Ovary (tissue), 10 donors: ENCODE measurements at regions of chr16 and their contacts with region 1.

Region 1: DNA sequence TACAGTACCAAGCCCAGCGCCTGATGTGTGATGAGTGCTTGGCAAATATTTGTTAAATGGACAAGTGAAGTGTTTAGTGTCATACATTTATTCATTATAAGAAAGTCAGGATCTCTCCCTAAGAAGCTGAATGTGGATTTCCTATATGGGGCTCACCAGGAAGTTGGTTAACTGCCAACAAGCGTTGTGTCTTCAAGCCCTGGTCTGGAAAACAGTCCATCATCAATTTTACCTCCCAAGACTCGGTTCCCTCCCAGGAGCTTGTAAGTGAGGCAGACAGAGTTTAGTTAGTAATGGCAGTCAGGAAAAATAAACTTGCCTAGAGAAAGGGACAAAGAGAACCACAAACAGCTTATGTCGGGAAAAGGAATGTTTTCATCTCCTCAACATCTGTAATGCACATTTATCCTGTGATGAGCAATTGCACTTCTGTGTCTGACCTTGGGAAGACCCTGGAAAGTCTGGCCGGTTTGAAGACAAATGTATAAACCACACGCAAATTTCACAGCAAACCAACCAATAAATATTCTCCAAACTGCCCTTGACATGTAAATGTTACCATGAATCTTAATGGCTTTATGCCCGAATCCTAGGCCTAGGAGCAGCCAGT is 28.3 kb downstream of the C16orf95 start:
- DNase-seq: no peak
- H3K4me3 ChIP-seq: no peak overlapping the region
- H3K27ac ChIP-seq: no peak overlapping the region
- H3K4me1 ChIP-seq: no peaks in the 10 kb centered on the region
- H3K27me3 ChIP-seq: no peaks in the 10 kb centered on the region
- CTCF ChIP-seq: no peak
- EP300 ChIP-seq: no peak
- POLR2A ChIP-seq: no peak

Region 2: DNA sequence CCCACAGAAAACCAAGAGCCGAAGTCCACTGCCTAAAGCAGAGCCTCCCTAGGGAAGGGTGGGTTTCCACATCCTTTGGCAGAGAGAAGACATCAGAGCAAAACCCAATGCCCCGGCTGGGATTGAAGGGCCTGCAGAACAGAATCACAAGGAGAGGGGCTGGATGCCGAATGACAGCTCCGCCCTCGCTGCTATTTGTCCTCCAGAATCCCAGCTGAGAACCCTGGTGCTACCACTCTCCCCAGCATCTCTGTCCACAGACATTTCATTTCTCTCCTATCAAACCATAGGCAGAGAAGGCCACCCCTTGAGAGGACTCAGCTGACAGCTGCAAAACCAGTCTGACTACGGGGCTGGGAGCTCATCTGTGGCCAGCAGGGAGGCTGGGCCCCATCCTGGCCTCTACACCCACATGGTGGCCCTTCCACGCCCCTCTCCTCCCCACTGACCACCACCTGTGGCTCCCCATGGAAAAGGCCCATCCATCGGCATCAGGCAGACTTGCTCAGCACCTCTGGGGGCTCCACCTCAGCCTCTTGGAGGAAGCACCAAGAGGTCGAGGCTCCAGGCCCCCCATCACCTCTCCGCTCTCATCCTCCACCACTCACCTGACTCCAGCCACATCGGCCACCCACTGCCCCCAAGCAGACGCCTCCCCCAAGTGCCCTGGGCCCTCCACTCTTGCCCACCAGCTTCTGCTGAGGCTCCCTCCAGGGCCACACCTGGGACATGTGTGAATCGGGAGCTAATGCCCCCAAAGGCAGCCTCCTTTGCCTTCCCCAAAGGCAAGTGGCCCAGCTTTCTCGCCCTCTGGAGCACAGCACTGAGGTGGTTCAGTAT is 260.2 kb before region 1 on chr16:
- intact Hi-C with region 1: loop called in 1 of 4 experiments (anchors 1 kb)
- DNase-seq: no peak
- H3K4me3 ChIP-seq: no peak overlapping the region
- H3K27ac ChIP-seq: no peak overlapping the region
- H3K4me1 ChIP-seq: peaks cover 3% of the 10 kb centered on the region
- H3K27me3 ChIP-seq: no peaks in the 10 kb centered on the region
- CTCF ChIP-seq: no peak
- EP300 ChIP-seq: no peak
- POLR2A ChIP-seq: no peak